Activated CD4-positive, alpha-beta memory T cell treated with anti-CD3 and anti-CD28 coated beads, Interleukin-2, amount 10 ng/mL, durations not matched to agents 7 days and 5 days (primary cell): ENCODE measurements at regions of chr15 and their contacts with region 1.

Region 1: DNA sequence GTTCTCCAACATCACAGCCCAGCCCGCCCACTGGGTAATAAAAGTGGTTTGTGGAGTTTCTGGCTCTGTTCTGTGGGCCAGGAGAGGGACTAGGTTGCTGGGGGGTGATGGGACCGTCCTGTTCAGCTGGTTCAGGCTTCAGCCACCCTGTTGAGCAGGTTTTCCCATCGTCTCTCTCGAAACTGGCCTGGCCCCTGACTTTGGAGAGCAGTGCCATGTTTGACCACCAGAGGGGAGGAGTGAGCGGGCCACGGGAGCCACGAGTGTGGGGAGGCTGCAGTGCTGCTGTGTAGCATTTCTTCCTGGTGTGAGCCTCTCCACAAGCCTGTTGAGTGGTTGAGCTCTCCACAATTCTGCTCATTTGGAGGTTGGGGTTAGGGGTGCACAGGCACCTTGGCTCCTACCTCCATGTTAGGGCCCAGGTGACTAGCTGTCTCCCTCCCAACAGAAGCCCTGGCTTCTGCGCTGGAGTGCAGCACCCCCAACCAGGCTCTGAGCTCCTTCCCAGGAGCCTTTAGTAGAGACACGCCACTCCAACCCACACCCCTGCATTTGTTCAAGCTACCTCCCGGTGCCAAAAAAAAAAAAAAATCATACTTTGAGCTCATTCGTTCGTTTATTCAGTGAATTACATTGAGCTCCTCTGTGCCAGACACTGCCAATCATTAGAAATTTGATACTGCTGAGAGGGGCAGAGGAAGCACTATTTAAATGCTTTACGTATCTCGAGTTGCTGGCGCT is 13.9 kb downstream of the SPINT1 start:
- DNase-seq: peak; percentile 84
- H3K4me3 Mint-ChIP-seq: no peak overlapping the region
- H3K27ac Mint-ChIP-seq: no peak overlapping the region
- H3K4me1 Mint-ChIP-seq: peaks cover 18% of the 10 kb centered on the region
- H3K27me3 Mint-ChIP-seq: no peaks in the 10 kb centered on the region

Region 2: GRCh38 chr15:40763801-40764732 is 93.7 kb before region 1 on chr15 and contains the start of gene GCHFR:
- CTCF ChIA-PET with region 1: interaction called, 10 read pairs
- POLR2A ChIA-PET with region 1: no interaction called
- DNase-seq: peak; percentile 77
- H3K4me3 Mint-ChIP-seq: peak within 1 kb of the TSS; percentile 76
- H3K27ac Mint-ChIP-seq: peak within 1 kb of the TSS; percentile 83
- H3K4me1 Mint-ChIP-seq: peaks cover 44% of the 10 kb centered on the region
- H3K27me3 Mint-ChIP-seq: no peaks in the 10 kb centered on the region
- total RNA-seq, gene GCHFR: 39.4 to 39.6 TPM

Region 3: GRCh38 chr15:40847205-40847961 is 10.4 kb before region 1 on chr15:
- CTCF ChIA-PET with region 1: interaction called, 22 read pairs
- POLR2A ChIA-PET with region 1: interaction called, 6 read pairs
- DNase-seq: no peak
- H3K4me3 Mint-ChIP-seq: no peak overlapping the region
- H3K27ac Mint-ChIP-seq: no peak overlapping the region
- H3K4me1 Mint-ChIP-seq: peaks cover 24% of the 10 kb centered on the region
- H3K27me3 Mint-ChIP-seq: peaks cover 18% of the 10 kb centered on the region

Region 4: DNA sequence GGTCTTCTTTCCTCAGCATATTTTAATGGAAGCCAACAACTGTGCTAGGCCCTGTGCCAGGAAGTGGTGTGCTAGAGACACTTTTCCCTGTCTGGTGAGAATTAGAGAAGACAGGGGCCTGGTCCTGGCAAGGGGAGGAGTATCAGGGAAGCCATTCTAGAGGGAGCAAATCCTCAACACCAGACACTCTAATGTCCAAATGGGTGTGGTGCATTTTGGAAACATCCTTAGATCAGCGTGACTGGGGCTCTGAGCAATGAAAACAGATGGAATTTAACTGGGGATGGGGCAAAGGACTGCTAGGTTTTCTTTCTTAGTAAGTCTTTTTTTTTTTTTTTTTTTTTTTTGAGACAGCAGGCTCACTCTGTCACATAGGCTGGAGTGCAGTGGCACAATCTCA is 28.8 kb after region 1 on chr15:
- CTCF ChIA-PET with region 1: interaction called, 216 read pairs
- POLR2A ChIA-PET with region 1: interaction called, 17 read pairs
- DNase-seq: no peak
- H3K4me3 Mint-ChIP-seq: no peak overlapping the region
- H3K27ac Mint-ChIP-seq: no peak overlapping the region
- H3K4me1 Mint-ChIP-seq: peaks cover 14% of the 10 kb centered on the region
- H3K27me3 Mint-ChIP-seq: peaks cover 3% of the 10 kb centered on the region

Region 5: DNA sequence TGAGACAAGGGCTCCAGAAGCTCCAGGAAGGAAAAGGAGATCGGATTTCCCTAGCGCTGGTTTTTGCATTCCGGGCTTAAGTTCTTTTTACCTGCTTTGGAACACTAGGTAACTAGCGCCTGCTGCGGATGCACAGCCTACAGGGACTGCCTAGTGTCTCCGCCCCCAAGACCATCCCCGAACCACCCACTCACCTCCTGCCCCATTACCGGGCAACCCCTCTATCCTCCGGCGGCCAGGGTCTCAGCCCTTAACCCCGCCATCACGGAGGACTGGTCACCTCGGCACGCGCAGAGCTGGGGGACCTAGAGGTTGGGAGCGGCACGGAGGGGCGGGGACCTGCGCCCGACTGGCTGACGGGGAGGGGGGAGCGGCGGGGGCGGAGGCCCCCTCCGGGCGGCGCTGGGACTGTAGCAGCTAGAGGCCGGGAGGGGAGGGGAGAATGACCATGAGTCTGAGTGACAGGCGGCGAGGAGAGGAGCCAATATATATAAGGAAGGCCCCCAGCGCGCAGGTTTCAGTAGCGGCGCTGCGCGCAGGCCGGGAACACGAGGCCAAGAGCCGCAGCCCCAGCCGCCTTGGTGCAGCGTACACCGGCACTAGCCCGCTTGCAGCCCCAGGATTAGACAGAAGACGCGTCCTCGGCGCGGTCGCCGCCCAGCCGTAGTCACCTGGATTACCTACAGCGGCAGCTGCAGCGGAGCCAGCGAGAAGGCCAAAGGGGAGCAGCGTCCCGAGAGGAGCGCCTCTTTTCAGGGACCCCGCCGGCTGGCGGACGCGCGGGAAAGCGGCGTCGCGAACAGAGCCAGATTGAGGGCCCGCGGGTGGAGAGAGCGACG is 71.3 kb after region 1 on chr15 and contains the start of gene DLL4:
- CTCF ChIA-PET with region 1: interaction called, 10 read pairs
- POLR2A ChIA-PET with region 1: no interaction called
- DNase-seq: peak; percentile 42
- H3K4me3 Mint-ChIP-seq: peak within 1 kb of the TSS; percentile 50
- H3K27ac Mint-ChIP-seq: no peak within 1 kb of the TSS
- H3K4me1 Mint-ChIP-seq: peaks cover 47% of the 10 kb centered on the region
- H3K27me3 Mint-ChIP-seq: peaks cover 75% of the 10 kb centered on the region
- total RNA-seq, gene DLL4: not detected